ENCODE measurements at regions of chr10 and their contacts with region 1.

Region 1: GRCh38 chr10:110864662-110865140 is 7.0 kb upstream of the PDCD4 start:
- DNase-seq: peak; percentile 23 to 93
- ATAC-seq: peak; percentile 78 to 89 (median 82)
- H3K4me3 ChIP-seq: peak overlapping the region; percentile 3
- H3K4me3 Mint-ChIP-seq: peak overlapping the region; percentile 87
- H3K27ac ChIP-seq: peak overlapping the region; percentile 92
- H3K27ac Mint-ChIP-seq: peak overlapping the region; percentile 96 to 98
- H3K4me1 ChIP-seq: peaks cover 82% of the 10 kb centered on the region
- H3K4me1 Mint-ChIP-seq: peaks cover 91 to 96% of the 10 kb centered on the region in 2 donors
- H3K27me3 ChIP-seq: no peaks in the 10 kb centered on the region
- H3K27me3 Mint-ChIP-seq: no peaks in the 10 kb centered on the region
- CTCF ChIP-seq: no peak

Region 2: DNA sequence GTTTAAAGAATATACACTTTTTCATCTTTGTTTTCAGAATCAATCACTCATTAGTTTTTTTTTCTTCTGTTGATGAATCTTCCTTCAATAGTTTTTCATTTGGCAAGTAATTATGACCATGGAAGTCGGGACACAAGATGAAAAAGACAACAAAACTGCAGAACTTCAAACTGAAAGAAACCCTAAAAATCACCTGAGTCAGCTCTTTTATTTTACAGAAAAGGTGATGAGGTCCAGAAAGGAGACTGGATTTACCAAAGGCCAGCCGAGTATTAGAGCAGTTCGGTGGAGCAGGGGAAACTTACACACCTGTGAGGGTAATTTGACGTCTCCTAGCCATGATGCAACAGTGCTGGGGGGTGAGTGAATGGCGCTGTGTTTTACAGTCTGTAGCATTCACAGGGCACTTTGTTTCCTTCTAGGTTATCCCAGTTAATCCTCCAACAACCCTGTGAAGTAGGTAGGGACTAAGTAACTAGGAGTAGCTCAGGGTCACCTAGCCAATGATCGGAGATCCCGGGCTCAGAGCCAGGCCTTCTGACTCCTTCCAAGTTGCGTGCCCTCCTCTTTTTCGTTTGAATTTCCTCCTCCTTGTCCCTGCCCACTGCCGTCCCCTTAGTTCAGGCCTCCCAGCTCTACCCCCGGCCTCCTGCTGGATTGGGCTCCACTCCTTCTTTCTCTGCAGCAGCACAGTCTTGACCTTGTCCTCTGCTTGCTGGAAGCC is 206.6 kb before region 1 on chr10:
- intact Hi-C with region 1: no loop called
- DNase-seq: no peak
- ATAC-seq: no peak
- H3K4me3 ChIP-seq: no peak overlapping the region
- H3K4me3 Mint-ChIP-seq: no peak overlapping the region
- H3K27ac ChIP-seq: no peak overlapping the region
- H3K27ac Mint-ChIP-seq: no peak overlapping the region
- H3K4me1 ChIP-seq: no peaks in the 10 kb centered on the region
- H3K4me1 Mint-ChIP-seq: peaks cover 0 to 5% of the 10 kb centered on the region in 2 donors
- H3K27me3 ChIP-seq: peaks cover 6% of the 10 kb centered on the region
- H3K27me3 Mint-ChIP-seq: peaks cover 23 to 43% of the 10 kb centered on the region in 2 donors
- CTCF ChIP-seq: no peak

Region 3: GRCh38 chr10:110850099-110850498 is 14.6 kb before region 1 on chr10:
- intact Hi-C with region 1: loop called (anchors 1 kb)
- DNase-seq: peak in 1 of 2 donors; percentile 67
- ATAC-seq: peak; percentile 86 to 92 (median 87)
- H3K4me3 ChIP-seq: no peak overlapping the region
- H3K4me3 Mint-ChIP-seq: peak overlapping the region; percentile 83
- H3K27ac ChIP-seq: peak overlapping the region; percentile 36
- H3K27ac Mint-ChIP-seq: peak overlapping the region; percentile 85 to 87
- H3K4me1 ChIP-seq: peaks cover 65% of the 10 kb centered on the region
- H3K4me1 Mint-ChIP-seq: peaks cover 63 to 70% of the 10 kb centered on the region in 2 donors
- H3K27me3 ChIP-seq: no peaks in the 10 kb centered on the region
- H3K27me3 Mint-ChIP-seq: peaks cover 5 to 11% of the 10 kb centered on the region in 2 donors
- CTCF ChIP-seq: no peak

Region 4: GRCh38 chr10:110918643-110919363 is 54.1 kb after region 1 on chr10 and contains the start of gene BBIP1:
- intact Hi-C with region 1: loop called (anchors 1 kb)
- DNase-seq: peak; percentile 81 to 99
- ATAC-seq: peak; percentile 88 to 98 (median 90)
- H3K4me3 ChIP-seq: peak within 1 kb of the TSS; percentile 86
- H3K4me3 Mint-ChIP-seq: peak within 1 kb of the TSS; percentile 97
- H3K27ac ChIP-seq: peak within 1 kb of the TSS; percentile 98
- H3K27ac Mint-ChIP-seq: peak within 1 kb of the TSS; percentile 99 to 100
- H3K4me1 ChIP-seq: peaks cover 7% of the 10 kb centered on the region
- H3K4me1 Mint-ChIP-seq: peaks cover 33 to 46% of the 10 kb centered on the region in 2 donors
- H3K27me3 ChIP-seq: no peaks in the 10 kb centered on the region
- H3K27me3 Mint-ChIP-seq: no peaks in the 10 kb centered on the region
- CTCF ChIP-seq: no peak
- total RNA-seq, gene BBIP1: 27.2 to 58.6 (median 27.7) TPM

Region 5: DNA sequence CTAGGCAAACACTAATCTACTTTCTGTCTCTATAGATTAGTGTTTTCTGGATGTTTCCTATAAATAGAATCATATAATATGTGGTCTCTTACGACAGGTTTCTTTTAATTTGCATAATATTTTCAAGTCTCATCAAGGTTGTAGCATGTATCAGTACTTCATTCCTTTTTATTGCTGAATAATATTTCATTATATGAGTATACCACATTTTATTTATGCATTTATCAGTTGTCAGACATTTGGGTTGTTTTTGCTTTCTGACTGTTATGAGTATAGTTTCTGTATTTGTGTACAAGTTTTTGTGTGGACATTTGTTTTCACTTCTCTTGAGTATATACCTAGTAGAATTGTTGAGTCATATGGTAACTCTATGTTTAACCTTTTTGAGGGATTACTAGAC is 102.9 kb after region 1 on chr10:
- intact Hi-C with region 1: no loop called
- DNase-seq: no peak
- ATAC-seq: no peak
- H3K4me3 ChIP-seq: no peak overlapping the region
- H3K4me3 Mint-ChIP-seq: no peak overlapping the region
- H3K27ac ChIP-seq: no peak overlapping the region
- H3K27ac Mint-ChIP-seq: no peak overlapping the region
- H3K4me1 ChIP-seq: no peaks in the 10 kb centered on the region
- H3K4me1 Mint-ChIP-seq: peaks cover 55 to 67% of the 10 kb centered on the region in 2 donors
- H3K27me3 ChIP-seq: no peaks in the 10 kb centered on the region
- H3K27me3 Mint-ChIP-seq: no peaks in the 10 kb centered on the region
- CTCF ChIP-seq: no peak

Measured in natural killer cell (primary cell).